Adrenal gland (tissue), 19 donors: ENCODE measurements at regions of chr5 and their contacts with region 1.

Region 1: GRCh38 chr5:67361932-67362729 is 165.5 kb upstream of the CD180 start:
- DNase-seq: peak in 1 of 7 donors; percentile 66
- H3K4me3 ChIP-seq: no peak overlapping the region
- H3K27ac ChIP-seq: no peak overlapping the region
- H3K4me1 ChIP-seq: no peaks in the 10 kb centered on the region
- H3K27me3 ChIP-seq: no peaks in the 10 kb centered on the region
- CTCF ChIP-seq: no peak
- POLR2A ChIP-seq: no peak

Region 2: GRCh38 chr5:67047160-67047559 is 315.0 kb before region 1 on chr5:
- intact Hi-C with region 1: no loop called
- DNase-seq: peak; percentile 24 to 78 (median 41)
- H3K4me3 ChIP-seq: no peak overlapping the region
- H3K27ac ChIP-seq: peak overlapping the region in 1 of 5 donors; percentile 19
- H3K4me1 ChIP-seq: peaks cover 11 to 45% of the 10 kb centered on the region in 2 donors
- H3K27me3 ChIP-seq: no peaks in the 10 kb centered on the region
- CTCF ChIP-seq: no peak
- POLR2A ChIP-seq: no peak

Region 3: DNA sequence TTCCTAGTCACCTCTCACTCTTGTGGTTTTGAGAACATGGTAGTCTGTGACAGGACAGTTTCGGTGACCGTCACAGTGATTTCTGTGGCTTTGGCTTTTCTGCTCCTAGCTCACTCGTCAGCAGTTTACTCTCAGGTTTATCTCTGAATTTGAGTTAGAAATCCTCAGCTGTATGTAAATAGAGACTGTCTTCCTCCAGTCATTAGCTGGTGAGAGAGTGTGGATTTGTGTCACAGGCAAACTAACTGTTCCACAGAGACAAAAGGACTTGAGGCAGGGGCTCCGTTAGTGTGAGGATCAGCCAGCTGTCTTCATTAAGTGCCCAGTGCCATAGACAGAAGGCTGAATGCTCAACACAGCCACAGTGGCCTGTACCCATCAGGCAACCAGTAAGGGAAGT is 296.9 kb before region 1 on chr5:
- intact Hi-C with region 1: no loop called
- DNase-seq: no peak
- H3K4me3 ChIP-seq: no peak overlapping the region
- H3K27ac ChIP-seq: no peak overlapping the region
- H3K4me1 ChIP-seq: no peaks in the 10 kb centered on the region
- H3K27me3 ChIP-seq: no peaks in the 10 kb centered on the region
- CTCF ChIP-seq: no peak
- POLR2A ChIP-seq: no peak

Region 4: GRCh38 chr5:67246108-67246507 is 116.0 kb before region 1 on chr5:
- intact Hi-C with region 1: loop called in 1 of 2 experiments (anchors 10 kb)
- DNase-seq: peak in 1 of 7 donors; percentile 23
- H3K4me3 ChIP-seq: no peak overlapping the region
- H3K27ac ChIP-seq: peak overlapping the region in 2 of 5 donors; percentile 0 to 9
- H3K4me1 ChIP-seq: no peaks in the 10 kb centered on the region
- H3K27me3 ChIP-seq: no peaks in the 10 kb centered on the region
- CTCF ChIP-seq: peak; percentile 71 to 92 (median 82)
- POLR2A ChIP-seq: no peak